CD4-positive, alpha-beta memory T cell (primary cell): ENCODE measurements at regions of chr5 and their contacts with region 1.

Region 1: DNA sequence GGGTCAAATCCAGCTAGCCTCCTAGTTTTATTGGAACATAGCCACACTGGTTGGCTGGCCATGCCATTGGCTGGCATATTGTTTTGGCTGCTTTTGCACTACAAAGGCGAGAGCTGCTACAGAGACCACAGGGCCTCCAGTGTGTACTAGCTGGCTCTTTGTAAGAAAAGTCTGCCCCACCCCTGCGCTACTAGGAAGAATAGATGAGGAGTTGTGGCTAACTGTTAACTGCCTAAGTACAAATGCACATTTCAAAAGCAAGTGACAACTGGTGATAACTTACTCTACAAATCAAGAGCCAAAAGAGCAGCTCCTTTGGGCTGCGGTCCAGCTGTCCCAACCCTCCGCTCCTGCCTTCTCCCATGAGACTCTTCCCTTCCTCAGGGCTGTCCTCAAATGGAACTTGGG is 63.9 kb downstream of the SERINC5 start:
- DNase-seq: peak; percentile 56 to 73 (median 58)
- H3K4me3 ChIP-seq: peak overlapping the region; percentile 9 to 37
- H3K4me3 Mint-ChIP-seq: peak overlapping the region; percentile 64 to 89 (median 80)
- H3K27ac ChIP-seq: peak overlapping the region; percentile 69
- H3K27ac Mint-ChIP-seq: peak overlapping the region; percentile 88 to 97 (median 92)
- H3K4me1 ChIP-seq: peaks cover 94% of the 10 kb centered on the region
- H3K4me1 Mint-ChIP-seq: peaks cover 68 to 93% (median 81%) of the 10 kb centered on the region in 4 donors
- H3K27me3 ChIP-seq: no peaks in the 10 kb centered on the region
- H3K27me3 Mint-ChIP-seq: no peaks in the 10 kb centered on the region

Region 2: DNA sequence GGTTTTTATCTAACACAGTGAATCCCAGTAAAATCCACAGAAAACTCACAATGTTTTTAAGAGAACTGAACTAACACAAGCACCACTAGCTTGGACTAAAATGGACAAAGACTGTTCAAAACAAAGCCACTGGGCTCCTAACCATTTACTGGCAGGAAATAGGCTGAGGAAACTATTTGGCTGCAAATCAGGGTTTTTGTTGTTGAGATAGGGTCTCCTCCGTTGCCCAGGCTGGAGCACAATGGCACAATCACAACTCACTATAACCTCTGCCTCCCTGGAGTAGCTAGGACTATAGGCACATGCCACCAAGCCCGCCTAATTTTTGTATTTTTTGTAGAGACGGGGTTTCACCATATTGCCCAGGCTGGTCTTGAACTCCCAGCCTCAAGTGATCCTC is 57.1 kb before region 1 on chr5:
- CTCF ChIA-PET with region 1: interaction called, 6 read pairs
- POLR2A ChIA-PET with region 1: interaction called, 51 read pairs
- intact Hi-C with region 1: loop called (anchors 1 kb)
- DNase-seq: no peak
- H3K4me3 ChIP-seq: no peak overlapping the region
- H3K4me3 Mint-ChIP-seq: peak overlapping the region; percentile 7 to 87 (median 77)
- H3K27ac ChIP-seq: peak overlapping the region; percentile 54
- H3K27ac Mint-ChIP-seq: peak overlapping the region; percentile 69 to 97 (median 92)
- H3K4me1 ChIP-seq: peaks cover 86% of the 10 kb centered on the region
- H3K4me1 Mint-ChIP-seq: peaks cover 70 to 88% (median 80%) of the 10 kb centered on the region in 4 donors
- H3K27me3 ChIP-seq: no peaks in the 10 kb centered on the region
- H3K27me3 Mint-ChIP-seq: no peaks in the 10 kb centered on the region

Region 3: DNA sequence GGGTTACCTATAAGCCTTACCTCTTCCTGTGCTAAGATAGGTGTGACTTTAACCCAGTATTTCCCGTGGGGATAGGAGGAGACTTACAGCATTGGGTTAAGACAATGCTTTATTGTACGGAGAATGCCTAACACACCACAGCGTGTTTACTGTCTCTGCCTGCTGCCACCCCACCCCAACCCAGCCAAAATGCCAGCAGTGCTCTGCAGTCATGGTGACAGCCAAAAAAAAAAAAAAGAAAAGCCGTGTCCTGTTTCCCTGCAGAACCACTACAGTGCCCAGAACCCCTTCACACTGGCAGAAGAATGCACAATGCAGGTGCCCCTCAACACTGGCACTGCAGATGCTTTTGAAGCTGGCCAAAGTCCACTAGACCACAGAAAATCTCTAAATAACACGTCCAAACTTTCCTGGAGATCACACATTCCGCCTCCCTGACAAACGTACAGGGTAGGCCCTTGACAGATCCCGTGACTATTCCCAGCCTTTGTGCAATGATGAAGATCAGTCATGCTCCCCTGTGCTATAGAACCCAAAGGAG is 38.3 kb before region 1 on chr5:
- CTCF ChIA-PET with region 1: no interaction called
- POLR2A ChIA-PET with region 1: interaction called, 16 read pairs
- intact Hi-C with region 1: no loop called
- DNase-seq: peak in 4 of 5 donors; percentile 45 to 58 (median 50)
- H3K4me3 ChIP-seq: no peak overlapping the region
- H3K4me3 Mint-ChIP-seq: peak overlapping the region in 7 of 8 donors; percentile 66 to 85 (median 79)
- H3K27ac ChIP-seq: no peak overlapping the region
- H3K27ac Mint-ChIP-seq: peak overlapping the region; percentile 83 to 97 (median 96)
- H3K4me1 ChIP-seq: peaks cover 57% of the 10 kb centered on the region
- H3K4me1 Mint-ChIP-seq: peaks cover 48 to 81% (median 62%) of the 10 kb centered on the region in 4 donors
- H3K27me3 ChIP-seq: no peaks in the 10 kb centered on the region
- H3K27me3 Mint-ChIP-seq: no peaks in the 10 kb centered on the region

Region 4: GRCh38 chr5:80181618-80182211 is 10.3 kb before region 1 on chr5:
- CTCF ChIA-PET with region 1: interaction called, 5 read pairs
- POLR2A ChIA-PET with region 1: interaction called, 136 read pairs
- intact Hi-C with region 1: loop called (anchors 1 kb)
- DNase-seq: peak; percentile 79 to 84 (median 81)
- H3K4me3 ChIP-seq: peak overlapping the region in 1 of 2 donors; percentile 5
- H3K4me3 Mint-ChIP-seq: peak overlapping the region; percentile 28 to 76 (median 69)
- H3K27ac ChIP-seq: peak overlapping the region; percentile 48
- H3K27ac Mint-ChIP-seq: peak overlapping the region; percentile 89 to 97 (median 95)
- H3K4me1 ChIP-seq: peaks cover 97% of the 10 kb centered on the region
- H3K4me1 Mint-ChIP-seq: peaks cover 67 to 91% (median 84%) of the 10 kb centered on the region in 4 donors
- H3K27me3 ChIP-seq: no peaks in the 10 kb centered on the region
- H3K27me3 Mint-ChIP-seq: no peaks in the 10 kb centered on the region

Region 5: GRCh38 chr5:80211327-80211726 is 19.3 kb after region 1 on chr5:
- CTCF ChIA-PET with region 1: interaction called, 24 read pairs
- POLR2A ChIA-PET with region 1: interaction called, 103 read pairs
- intact Hi-C with region 1: loop called (anchors 2 kb)
- DNase-seq: no peak
- H3K4me3 ChIP-seq: no peak overlapping the region
- H3K4me3 Mint-ChIP-seq: peak overlapping the region in 7 of 8 donors; percentile 53 to 89 (median 71)
- H3K27ac ChIP-seq: peak overlapping the region; percentile 8
- H3K27ac Mint-ChIP-seq: peak overlapping the region; percentile 9 to 99 (median 61)
- H3K4me1 ChIP-seq: peaks cover 100% of the 10 kb centered on the region
- H3K4me1 Mint-ChIP-seq: peaks cover 82 to 100% (median 92%) of the 10 kb centered on the region in 4 donors
- H3K27me3 ChIP-seq: no peaks in the 10 kb centered on the region
- H3K27me3 Mint-ChIP-seq: no peaks in the 10 kb centered on the region

Region 6: DNA sequence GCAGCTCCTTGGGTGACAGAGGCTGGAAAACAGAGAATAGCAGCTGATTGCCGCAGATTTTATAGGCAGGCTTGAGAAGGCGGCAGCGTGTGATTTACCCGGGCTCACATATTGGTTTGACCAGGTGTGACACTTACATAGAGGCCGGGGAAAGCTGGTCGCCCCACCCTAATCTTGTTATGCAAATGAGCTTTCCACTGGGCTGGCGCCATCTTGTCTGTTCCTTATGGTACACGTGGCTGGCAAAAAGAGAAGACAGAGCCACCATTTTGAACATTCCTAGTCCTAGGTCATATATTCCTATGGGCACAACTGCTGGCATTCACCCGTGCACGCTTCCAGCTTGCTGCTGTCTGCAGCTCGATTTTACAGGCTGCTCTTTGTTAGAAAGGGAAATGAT is 116.5 kb after region 1 on chr5:
- CTCF ChIA-PET with region 1: interaction called, 12 read pairs
- POLR2A ChIA-PET with region 1: interaction called, 3 read pairs
- intact Hi-C with region 1: no loop called
- DNase-seq: no peak
- H3K4me3 ChIP-seq: no peak overlapping the region
- H3K4me3 Mint-ChIP-seq: no peak overlapping the region
- H3K27ac ChIP-seq: no peak overlapping the region
- H3K27ac Mint-ChIP-seq: no peak overlapping the region
- H3K4me1 ChIP-seq: no peaks in the 10 kb centered on the region
- H3K4me1 Mint-ChIP-seq: peaks cover 0 to 1% (median 0%) of the 10 kb centered on the region in 4 donors
- H3K27me3 ChIP-seq: no peaks in the 10 kb centered on the region
- H3K27me3 Mint-ChIP-seq: no peaks in the 10 kb centered on the region